ENCODE measurements at regions of chr2 and their contacts with region 1.

Region 1: DNA sequence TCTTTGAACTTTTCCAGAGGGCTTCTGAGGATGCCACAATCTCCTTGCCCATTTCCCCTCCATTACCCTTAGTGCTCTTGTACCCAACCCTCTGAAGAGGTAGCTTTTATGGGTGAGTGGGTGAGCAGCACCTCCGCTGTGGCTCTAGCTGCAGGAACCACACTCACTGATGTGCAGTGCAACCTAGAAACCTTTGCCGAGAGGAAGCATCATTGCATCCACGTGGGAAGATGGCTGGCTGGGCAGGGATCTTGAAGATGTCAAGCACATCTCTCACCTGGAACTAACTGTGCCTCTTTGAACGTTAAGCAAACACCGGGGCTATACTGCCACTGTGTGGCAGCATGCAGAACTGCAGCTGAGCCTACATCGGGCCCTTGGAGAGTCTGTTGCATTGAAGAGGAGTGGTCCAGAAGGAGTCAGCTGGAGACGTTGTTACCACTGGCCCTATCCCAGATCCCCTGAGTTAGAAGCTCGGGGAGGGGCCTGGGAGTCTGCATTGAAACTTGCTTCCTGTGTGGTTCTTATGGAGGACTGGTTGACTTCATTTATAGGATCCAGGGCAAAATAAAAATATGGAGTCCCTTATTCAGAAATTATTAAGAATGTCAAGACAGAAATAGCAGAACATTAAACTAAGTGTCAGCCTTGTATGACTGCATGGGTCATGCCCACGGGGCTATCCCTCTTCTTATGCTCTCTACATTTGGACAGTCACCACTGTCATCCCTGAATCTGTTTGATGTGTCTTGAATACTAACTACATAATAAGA is 28.7 kb downstream of the IGFBP5 start:
- DNase-seq: peak; percentile 80
- ATAC-seq: peak; percentile 81
- H3K4me3 Mint-ChIP-seq: no peak overlapping the region
- H3K27ac Mint-ChIP-seq: peak overlapping the region; percentile 26
- H3K4me1 Mint-ChIP-seq: peaks cover 1% of the 10 kb centered on the region
- H3K27me3 Mint-ChIP-seq: peaks cover 5% of the 10 kb centered on the region

Region 2: GRCh38 chr2:216519154-216519762 is 147.4 kb before region 1 on chr2:
- POLR2A ChIA-PET with region 1: interaction called, 12 read pairs
- DNase-seq: no peak
- ATAC-seq: peak; percentile 82
- H3K4me3 Mint-ChIP-seq: no peak overlapping the region
- H3K27ac Mint-ChIP-seq: no peak overlapping the region
- H3K4me1 Mint-ChIP-seq: peaks cover 1% of the 10 kb centered on the region
- H3K27me3 Mint-ChIP-seq: no peaks in the 10 kb centered on the region

Measured in activated naive CD8-positive, alpha-beta T cell treated with anti-CD3 and anti-CD28 coated beads, Interleukin-2, amount 10 ng/mL, durations not matched to agents 7 days and 5 days (primary cell).